ENCODE measurements at regions of chr17 and their contacts with region 1.

Region 1: DNA sequence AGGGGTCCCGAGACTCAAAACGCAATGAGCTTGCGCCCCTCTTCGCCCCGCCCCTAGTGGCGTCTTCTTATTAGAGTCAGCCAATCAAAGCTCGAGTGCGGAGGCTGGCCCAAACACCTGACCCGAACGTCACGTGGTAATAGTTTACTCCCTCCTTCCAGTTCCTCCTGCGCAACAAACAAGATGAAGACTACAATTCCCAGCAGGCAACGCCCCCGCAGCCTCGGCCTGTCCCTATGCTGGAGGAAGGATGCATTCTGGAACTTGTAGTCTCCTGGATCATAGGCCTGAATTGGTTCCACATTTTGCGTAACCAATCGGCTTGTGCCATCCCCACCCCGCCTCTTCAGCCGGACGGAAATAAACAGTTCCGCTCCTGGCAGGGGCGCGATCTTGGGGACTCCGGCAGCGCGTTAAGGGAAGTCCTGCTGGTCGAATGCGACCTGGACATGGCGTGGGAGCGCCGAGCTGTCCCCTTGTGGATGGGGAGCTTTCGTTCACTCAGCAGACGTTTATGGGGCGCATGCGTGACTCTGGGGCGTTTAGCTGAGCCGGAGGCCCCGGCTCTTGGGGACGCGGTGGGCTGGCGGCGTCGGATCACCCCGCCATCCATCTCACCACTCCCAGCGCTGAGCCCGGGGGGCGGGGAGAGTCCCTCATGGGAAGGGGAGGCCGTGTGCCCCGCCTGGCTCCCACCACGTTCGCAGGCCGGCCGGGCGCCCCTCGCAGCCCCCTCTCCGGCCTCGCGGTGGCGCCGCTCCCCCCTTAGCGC is at the start of gene WBP2:
- DNase-seq: peak; percentile 90 to 99 (median 98)
- ATAC-seq: peak; percentile 87 to 91
- H3K4me3 Mint-ChIP-seq: peak within 1 kb of the TSS in 2 of 10 donors; percentile 90 to 95
- H3K27ac Mint-ChIP-seq: peak within 1 kb of the TSS in 6 of 10 donors; percentile 90 to 97 (median 92)
- H3K4me1 Mint-ChIP-seq: peaks cover 6 to 44% (median 28%) of the 10 kb centered on the region in 4 donors
- H3K27me3 Mint-ChIP-seq: no peaks in the 10 kb centered on the region
- polyA plus RNA-seq, gene WBP2: 58.1 to 95.1 (median 70.6) TPM

Region 2: GRCh38 chr17:75749545-75750389 is 105.7 kb before region 1 on chr17:
- POLR2A ChIA-PET with region 1: interaction called, 17 read pairs
- DNase-seq: peak; percentile 71 to 93 (median 86)
- ATAC-seq: peak; percentile 67 to 73
- H3K4me3 Mint-ChIP-seq: peak overlapping the region in 1 of 10 donors; percentile 11
- H3K27ac Mint-ChIP-seq: peak overlapping the region in 3 of 10 donors; percentile 27 to 83 (median 51)
- H3K4me1 Mint-ChIP-seq: peaks cover 10 to 18% (median 15%) of the 10 kb centered on the region in 4 donors
- H3K27me3 Mint-ChIP-seq: peaks cover 0 to 3% (median 0%) of the 10 kb centered on the region in 5 donors

Region 3: DNA sequence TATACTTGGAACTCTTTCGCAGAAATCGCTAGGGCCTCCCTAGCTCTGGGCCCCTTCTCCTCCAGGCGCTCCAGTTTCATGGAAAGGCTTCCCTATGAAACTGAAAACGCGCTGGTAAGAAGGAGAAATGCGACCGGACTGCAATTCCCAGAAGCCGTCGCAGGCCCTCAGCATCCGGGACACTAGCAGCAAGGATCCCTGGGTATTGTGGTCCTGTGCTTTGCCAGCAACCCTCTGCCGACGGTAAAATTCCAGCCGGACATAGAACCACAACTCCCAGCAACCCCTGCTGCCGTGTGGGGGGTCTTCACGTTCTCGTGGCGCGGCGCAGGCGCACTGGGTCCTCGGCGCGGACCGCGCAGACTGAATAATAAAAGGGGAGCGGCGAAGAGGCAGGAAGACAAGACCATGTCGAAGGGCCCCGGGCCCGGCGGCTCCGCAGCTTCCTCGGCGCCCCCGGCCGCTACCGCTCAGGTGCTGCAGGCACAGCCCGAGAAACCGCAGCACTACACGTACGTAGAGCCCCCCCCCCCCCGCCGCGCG is 71.0 kb before region 1 on chr17 and contains the start of gene UNK:
- POLR2A ChIA-PET with region 1: interaction called, 122 read pairs
- DNase-seq: peak; percentile 85 to 99 (median 95)
- ATAC-seq: peak; percentile 71 to 76
- H3K4me3 Mint-ChIP-seq: peak within 1 kb of the TSS; percentile 86 to 97 (median 92)
- H3K27ac Mint-ChIP-seq: peak within 1 kb of the TSS; percentile 94 to 100 (median 100)
- H3K4me1 Mint-ChIP-seq: peaks cover 21 to 72% (median 49%) of the 10 kb centered on the region in 4 donors
- H3K27me3 Mint-ChIP-seq: peaks cover 0 to 4% (median 0%) of the 10 kb centered on the region in 5 donors
- polyA plus RNA-seq, gene UNK: 24.4 to 26.9 (median 26.2) TPM

Region 4: GRCh38 chr17:75837871-75838270 is 17.6 kb before region 1 on chr17:
- POLR2A ChIA-PET with region 1: interaction called, 114 read pairs
- DNase-seq: no peak
- ATAC-seq: no peak
- H3K4me3 Mint-ChIP-seq: no peak overlapping the region
- H3K27ac Mint-ChIP-seq: peak overlapping the region in 7 of 10 donors; percentile 52 to 80 (median 68)
- H3K4me1 Mint-ChIP-seq: peaks cover 13 to 39% (median 26%) of the 10 kb centered on the region in 4 donors
- H3K27me3 Mint-ChIP-seq: no peaks in the 10 kb centered on the region

Region 5: GRCh38 chr17:75889454-75889853 is 34.0 kb after region 1 on chr17:
- POLR2A ChIA-PET with region 1: interaction called, 108 read pairs
- DNase-seq: no peak
- ATAC-seq: peak in 1 of 2 donors; percentile 30
- H3K4me3 Mint-ChIP-seq: no peak overlapping the region
- H3K27ac Mint-ChIP-seq: peak overlapping the region in 2 of 10 donors; percentile 33 to 56
- H3K4me1 Mint-ChIP-seq: peaks cover 8 to 11% (median 10%) of the 10 kb centered on the region in 4 donors
- H3K27me3 Mint-ChIP-seq: no peaks in the 10 kb centered on the region

Region 6: DNA sequence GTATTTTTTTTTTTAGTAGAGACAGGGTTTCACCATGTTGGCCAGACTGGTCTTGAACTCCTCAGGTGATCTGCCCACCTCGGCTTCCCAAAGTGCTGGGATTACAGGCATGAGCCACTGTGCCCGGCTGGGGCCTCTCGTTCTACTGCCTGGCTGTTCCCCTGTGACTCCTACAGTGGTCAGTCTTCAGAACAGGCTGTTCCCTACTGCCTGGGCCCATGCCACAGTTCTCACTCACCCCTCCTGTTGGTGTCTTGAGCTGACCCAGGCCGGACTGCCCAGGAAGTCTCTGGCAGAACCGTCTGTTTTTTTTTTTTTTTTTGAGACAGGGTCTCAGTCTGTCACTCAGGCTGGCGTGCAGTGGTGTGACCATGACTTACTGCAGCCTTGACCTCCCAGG is 148.4 kb after region 1 on chr17:
- POLR2A ChIA-PET with region 1: interaction called, 10 read pairs
- DNase-seq: no peak
- ATAC-seq: no peak
- H3K4me3 Mint-ChIP-seq: no peak overlapping the region
- H3K27ac Mint-ChIP-seq: peak overlapping the region in 1 of 10 donors; percentile 63
- H3K4me1 Mint-ChIP-seq: peaks cover 2 to 6% (median 4%) of the 10 kb centered on the region in 4 donors
- H3K27me3 Mint-ChIP-seq: no peaks in the 10 kb centered on the region